ENCODE measurements at regions of chr19 and their contacts with region 1.

Region 1: GRCh38 chr19:52048555-52049501 is at the start of gene ZNF432:
- DNase-seq: peak; percentile 94
- H3K4me3 Mint-ChIP-seq: peak within 1 kb of the TSS; percentile 98
- H3K27ac Mint-ChIP-seq: peak within 1 kb of the TSS; percentile 99
- H3K4me1 Mint-ChIP-seq: peaks cover 21% of the 10 kb centered on the region
- H3K27me3 Mint-ChIP-seq: no peaks in the 10 kb centered on the region
- total RNA-seq, gene ZNF432: 10.8 and 13.8 TPM in 2 replicates

Region 2: GRCh38 chr19:51593969-51594773 is 454.7 kb before region 1 on chr19:
- intact Hi-C with region 1: no loop called
- DNase-seq: peak; percentile 99
- H3K4me3 Mint-ChIP-seq: peak overlapping the region; percentile 91
- H3K27ac Mint-ChIP-seq: peak overlapping the region; percentile 84
- H3K4me1 Mint-ChIP-seq: peaks cover 22% of the 10 kb centered on the region
- H3K27me3 Mint-ChIP-seq: no peaks in the 10 kb centered on the region

Region 3: GRCh38 chr19:51904331-51905165 is 144.3 kb before region 1 on chr19 and contains the start of gene ZNF649:
- intact Hi-C with region 1: loop called (anchors 1 kb)
- DNase-seq: peak; percentile 93
- H3K4me3 Mint-ChIP-seq: peak within 1 kb of the TSS; percentile 87
- H3K27ac Mint-ChIP-seq: peak within 1 kb of the TSS; percentile 95
- H3K4me1 Mint-ChIP-seq: peaks cover 11% of the 10 kb centered on the region
- H3K27me3 Mint-ChIP-seq: peaks cover 4% of the 10 kb centered on the region
- total RNA-seq, gene ZNF649: 10.7 and 11.0 TPM in 2 replicates

Region 4: GRCh38 chr19:51986309-51987291 is 62.2 kb before region 1 on chr19 and contains the start of gene ZNF350:
- intact Hi-C with region 1: loop called (anchors 1 kb)
- DNase-seq: peak; percentile 96
- H3K4me3 Mint-ChIP-seq: peak within 1 kb of the TSS; percentile 91
- H3K27ac Mint-ChIP-seq: peak within 1 kb of the TSS; percentile 92
- H3K4me1 Mint-ChIP-seq: peaks cover 8% of the 10 kb centered on the region
- H3K27me3 Mint-ChIP-seq: no peaks in the 10 kb centered on the region
- total RNA-seq, gene ZNF350: 7.4 and 8.4 TPM in 2 replicates

Region 5: DNA sequence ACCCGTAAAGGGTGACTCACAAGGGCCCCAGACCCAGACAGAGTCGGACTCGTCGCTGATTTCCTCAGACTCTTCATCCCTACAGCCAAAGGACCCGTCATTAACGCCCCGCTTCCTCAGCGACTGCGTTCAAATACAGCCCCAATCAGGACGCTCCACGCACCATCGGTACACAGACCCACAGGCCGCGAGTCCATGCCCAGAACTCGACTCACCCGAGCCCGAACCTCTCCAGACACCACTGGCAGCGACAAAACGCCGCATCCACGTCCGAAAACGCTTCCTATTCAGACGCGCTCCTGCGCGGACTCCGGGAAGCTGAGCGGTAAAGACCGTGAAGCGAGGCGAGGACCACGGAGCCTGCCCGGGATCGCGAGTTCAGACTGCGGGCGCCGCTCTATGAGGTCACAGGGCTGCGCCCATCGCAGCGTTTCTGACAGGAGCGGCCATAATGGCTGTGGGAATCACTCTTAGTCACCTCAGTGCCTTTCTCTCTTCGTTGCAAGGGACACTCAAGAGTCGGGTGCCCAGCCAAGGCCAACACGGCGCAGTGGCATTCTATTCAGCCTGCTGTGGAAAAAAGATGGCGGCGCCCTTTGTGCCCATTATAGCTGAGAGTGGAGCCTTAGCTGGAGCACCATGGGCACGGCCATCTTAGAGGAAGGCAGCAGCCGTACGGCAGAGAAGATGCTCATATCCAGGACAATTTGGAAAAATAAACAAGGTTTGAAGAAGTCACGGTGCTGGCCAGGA is 20.6 kb before region 1 on chr19 and contains the start of gene ZNF614:
- intact Hi-C with region 1: loop called (anchors 1 kb)
- DNase-seq: peak; percentile 96
- H3K4me3 Mint-ChIP-seq: peak within 1 kb of the TSS; percentile 94
- H3K27ac Mint-ChIP-seq: peak within 1 kb of the TSS; percentile 95
- H3K4me1 Mint-ChIP-seq: peaks cover 15% of the 10 kb centered on the region
- H3K27me3 Mint-ChIP-seq: no peaks in the 10 kb centered on the region
- total RNA-seq, gene ZNF614: 11.0 and 12.7 TPM in 2 replicates

Region 6: GRCh38 chr19:52221831-52222375 is 173.1 kb after region 1 on chr19:
- intact Hi-C with region 1: no loop called
- DNase-seq: no peak
- H3K4me3 Mint-ChIP-seq: no peak overlapping the region
- H3K27ac Mint-ChIP-seq: no peak overlapping the region
- H3K4me1 Mint-ChIP-seq: peaks cover 6% of the 10 kb centered on the region
- H3K27me3 Mint-ChIP-seq: no peaks in the 10 kb centered on the region

Region 7: DNA sequence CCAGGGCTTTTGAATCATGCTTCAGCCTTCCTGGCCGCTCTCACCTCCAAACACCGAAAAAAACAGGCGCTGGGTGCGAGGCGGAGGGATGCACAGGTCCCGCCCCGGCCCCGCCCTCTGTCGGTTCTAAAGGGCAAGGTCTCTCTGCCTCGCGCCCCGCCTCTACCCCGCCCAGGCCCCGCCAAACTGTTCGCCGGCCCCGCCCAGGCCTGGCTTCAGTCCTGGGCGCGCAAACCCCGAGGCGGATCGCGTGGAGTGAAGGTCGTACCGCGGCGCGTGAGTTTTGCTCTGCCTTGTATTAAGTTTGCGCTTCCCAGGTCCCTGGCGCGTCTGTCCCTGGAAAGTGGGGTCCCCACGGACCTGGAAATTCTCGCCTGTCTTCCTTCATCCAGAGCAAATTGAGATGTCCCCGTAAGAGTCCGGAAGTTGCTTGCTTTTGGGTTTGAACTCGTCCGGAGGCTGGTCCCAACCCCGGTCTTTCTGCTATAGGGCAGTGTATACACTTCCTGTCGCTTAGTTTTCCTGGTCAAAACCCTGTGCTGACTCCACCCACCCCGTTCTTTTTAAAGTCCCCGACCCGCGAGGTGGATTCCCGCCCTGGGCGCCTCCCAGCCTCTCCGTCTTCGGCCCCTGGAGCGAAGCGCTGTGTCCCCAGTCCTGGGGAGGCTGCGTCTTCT is 487.1 kb after region 1 on chr19:
- intact Hi-C with region 1: loop called (anchors 2 kb)
- DNase-seq: peak; percentile 96
- H3K4me3 Mint-ChIP-seq: peak overlapping the region; percentile 85
- H3K27ac Mint-ChIP-seq: peak overlapping the region; percentile 91
- H3K4me1 Mint-ChIP-seq: peaks cover 19% of the 10 kb centered on the region
- H3K27me3 Mint-ChIP-seq: no peaks in the 10 kb centered on the region